RWPE1 (cell line): ENCODE measurements at regions of chr3 and their contacts with region 1.

Region 1: DNA sequence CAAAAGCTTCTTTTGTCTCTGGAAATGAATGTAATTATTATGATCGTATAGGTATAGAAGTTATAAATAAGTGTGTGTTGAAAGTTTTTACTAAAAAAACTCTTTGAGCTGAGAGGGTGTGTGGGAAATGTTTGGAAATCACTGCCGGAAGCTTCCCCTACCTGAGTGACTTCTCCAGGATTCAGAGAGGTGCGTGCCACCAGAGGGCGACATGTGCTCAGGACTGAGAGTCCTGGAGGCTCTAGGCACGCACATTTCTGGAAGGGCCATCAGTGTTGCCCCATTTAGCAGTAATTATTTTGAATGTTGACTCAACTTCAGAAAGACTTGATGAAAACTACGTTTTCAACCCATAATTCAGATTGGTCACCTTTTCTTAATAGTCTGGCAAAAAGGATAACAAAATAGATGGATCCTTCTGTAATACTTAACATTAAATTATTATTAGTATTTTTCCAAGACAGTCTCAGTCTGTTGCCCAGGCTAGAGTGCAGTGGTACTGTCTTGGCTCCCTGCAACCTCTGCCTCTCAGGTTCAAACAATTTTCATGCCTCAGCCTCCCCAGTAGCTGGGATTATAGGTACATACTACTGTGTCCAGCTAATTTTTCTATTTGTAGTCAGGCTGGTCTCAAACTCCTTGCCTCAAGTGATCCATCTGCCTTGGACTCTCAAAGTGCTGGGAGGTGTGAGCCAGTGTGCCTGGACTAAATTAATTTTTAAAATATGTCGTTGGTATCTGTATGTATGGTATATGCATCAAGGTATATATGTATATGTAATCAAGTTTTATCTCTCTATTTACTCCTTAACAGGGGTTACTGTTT is 34.5 kb downstream of the GPR171 start:
- DNase-seq: peak; percentile 63
- H3K27ac ChIP-seq: no peak overlapping the region
- CTCF ChIP-seq: peak; percentile 87

Region 2: GRCh38 chr3:150811984-150812383 is 356.5 kb before region 1 on chr3:
- CTCF ChIA-PET with region 1: no interaction called
- POLR2A ChIA-PET with region 1: no interaction called
- DNase-seq: no peak
- H3K27ac ChIP-seq: no peak overlapping the region
- CTCF ChIP-seq: no peak

Region 3: DNA sequence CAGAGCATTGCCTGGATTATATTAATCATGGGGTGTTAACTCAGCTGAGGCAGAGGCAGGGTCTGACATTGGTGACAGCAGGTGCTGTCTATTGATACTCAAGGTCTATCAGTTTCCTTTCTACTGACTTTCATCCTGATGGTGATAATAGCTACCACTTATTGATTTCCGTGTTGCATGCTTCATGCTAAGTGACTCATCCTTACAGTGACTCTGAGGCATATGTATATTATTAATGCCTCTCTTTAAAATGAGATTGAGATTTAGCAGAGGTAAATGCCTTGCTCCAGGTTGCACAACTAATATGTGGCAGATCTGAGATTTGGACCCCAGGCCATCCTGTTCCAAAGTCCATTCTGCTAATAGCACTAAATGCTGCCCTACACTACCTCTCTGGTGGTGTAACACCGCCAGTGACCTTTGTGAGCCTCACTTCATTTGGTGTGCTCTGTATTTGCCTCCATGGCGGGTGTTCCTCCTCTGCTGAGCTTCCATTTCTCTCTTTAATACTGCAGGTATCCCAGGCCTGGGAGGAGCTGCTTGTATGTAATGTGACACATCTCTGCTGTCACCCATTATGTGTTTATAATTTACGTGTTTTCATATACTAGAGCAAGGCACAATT is 15.9 kb before region 1 on chr3:
- CTCF ChIA-PET with region 1: interaction called, 14 read pairs
- POLR2A ChIA-PET with region 1: no interaction called
- DNase-seq: no peak
- H3K27ac ChIP-seq: no peak overlapping the region
- CTCF ChIP-seq: no peak

Region 4: GRCh38 chr3:151282921-151283320 is 114.4 kb after region 1 on chr3:
- CTCF ChIA-PET with region 1: interaction called, 22 read pairs
- POLR2A ChIA-PET with region 1: no interaction called
- DNase-seq: peak; percentile 64
- H3K27ac ChIP-seq: no peak overlapping the region
- CTCF ChIP-seq: peak; percentile 61

Region 5: DNA sequence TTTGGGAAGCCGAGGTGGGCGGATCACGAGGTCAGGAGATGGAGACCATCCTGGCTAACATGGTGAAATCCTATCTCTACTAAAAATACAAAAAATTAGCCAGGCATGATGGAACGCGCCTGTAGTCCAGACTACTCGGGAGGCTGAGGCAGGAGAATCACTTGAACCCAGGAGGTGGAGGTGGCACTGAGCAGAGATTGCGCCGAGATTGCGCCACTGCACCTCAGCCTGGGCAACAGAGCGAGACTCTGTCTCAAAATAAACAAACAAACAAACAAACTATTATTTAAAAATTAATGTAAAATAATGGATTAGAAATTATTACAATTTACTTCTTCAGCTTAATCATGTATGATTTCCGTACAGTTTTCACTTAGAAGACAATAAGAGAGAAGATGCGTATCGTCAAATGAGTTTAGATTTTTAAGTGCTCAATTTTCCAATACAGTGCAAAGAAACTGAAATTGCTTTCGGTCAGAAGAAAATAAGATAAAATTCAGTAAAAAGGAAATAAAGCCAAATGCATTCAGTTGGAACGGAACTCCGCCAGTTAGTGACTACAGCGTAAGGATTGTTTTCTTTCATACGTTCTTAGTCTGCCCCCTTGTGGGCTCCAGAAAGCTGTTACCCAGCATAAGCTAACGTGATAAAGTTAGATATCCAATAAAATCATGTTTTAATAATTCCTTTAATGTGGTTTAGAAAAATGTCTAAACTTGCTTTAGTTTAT is 670.3 kb after region 1 on chr3:
- CTCF ChIA-PET with region 1: no interaction called
- POLR2A ChIA-PET with region 1: no interaction called
- DNase-seq: peak; percentile 56
- H3K27ac ChIP-seq: no peak overlapping the region
- CTCF ChIP-seq: peak; percentile 82